ENCODE measurements at regions of chr4 and their contacts with region 1.

Region 1: GRCh38 chr4:88456757-88457306 is at the start of gene HERC5:
- DNase-seq: peak; percentile 87
- ATAC-seq: peak; percentile 91
- H3K4me3 ChIP-seq: peak within 1 kb of the TSS; percentile 78
- H3K27ac ChIP-seq: peak within 1 kb of the TSS; percentile 97
- H3K4me1 ChIP-seq: peaks cover 5% of the 10 kb centered on the region
- H3K27me3 ChIP-seq: no peaks in the 10 kb centered on the region
- CTCF ChIP-seq: peak in 2 of 3 experiments; percentile 33 to 63; a peak in 3 of 6 replicates
- EP300 ChIP-seq: no peak
- POLR2A ChIP-seq: peak; percentile 89
- RAD21 ChIP-seq: peak; percentile 34; the same call in 1 of the 2 replicates
- polyA plus RNA-seq, gene HERC5: 12.5 to 18.6 TPM

Region 2: DNA sequence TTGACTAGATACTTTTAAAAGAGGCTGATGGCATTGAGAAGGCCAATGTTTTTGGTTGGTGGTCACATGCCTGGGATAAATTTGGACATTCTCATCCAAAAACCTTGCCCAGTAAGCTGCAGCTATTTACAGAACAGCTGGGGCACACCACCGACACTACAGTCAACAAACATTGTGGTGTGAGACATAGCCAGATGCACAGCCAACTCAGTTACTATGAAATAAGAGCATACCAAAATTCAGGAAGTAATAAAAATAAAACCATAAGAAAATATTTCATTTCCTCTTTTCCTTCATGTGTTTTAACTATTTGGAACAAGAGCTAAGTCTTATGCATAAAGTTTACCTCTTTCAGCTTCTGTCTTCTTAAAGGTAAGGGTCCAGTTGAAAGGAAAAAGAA is 181.3 kb before region 1 on chr4:
- CTCF ChIA-PET with region 1: interaction called, 4 read pairs
- POLR2A ChIA-PET with region 1: interaction called, 27 read pairs
- RAD21 ChIA-PET with region 1: interaction called, 3 read pairs
- SMC1A ChIA-PET with region 1: interaction called, 19 read pairs
- in situ Hi-C with region 1: loop called (anchors 5 kb)
- intact Hi-C with region 1: no loop called
- DNase-seq: no peak
- ATAC-seq: peak; percentile 65
- H3K4me3 ChIP-seq: peak overlapping the region; percentile 53
- H3K27ac ChIP-seq: peak overlapping the region; percentile 1; the same call in 1 of the 2 replicates
- H3K4me1 ChIP-seq: peaks cover 39% of the 10 kb centered on the region
- H3K27me3 ChIP-seq: no peaks in the 10 kb centered on the region
- CTCF ChIP-seq: no peak
- EP300 ChIP-seq: no peak
- POLR2A ChIP-seq: no peak
- RAD21 ChIP-seq: no peak

Region 3: DNA sequence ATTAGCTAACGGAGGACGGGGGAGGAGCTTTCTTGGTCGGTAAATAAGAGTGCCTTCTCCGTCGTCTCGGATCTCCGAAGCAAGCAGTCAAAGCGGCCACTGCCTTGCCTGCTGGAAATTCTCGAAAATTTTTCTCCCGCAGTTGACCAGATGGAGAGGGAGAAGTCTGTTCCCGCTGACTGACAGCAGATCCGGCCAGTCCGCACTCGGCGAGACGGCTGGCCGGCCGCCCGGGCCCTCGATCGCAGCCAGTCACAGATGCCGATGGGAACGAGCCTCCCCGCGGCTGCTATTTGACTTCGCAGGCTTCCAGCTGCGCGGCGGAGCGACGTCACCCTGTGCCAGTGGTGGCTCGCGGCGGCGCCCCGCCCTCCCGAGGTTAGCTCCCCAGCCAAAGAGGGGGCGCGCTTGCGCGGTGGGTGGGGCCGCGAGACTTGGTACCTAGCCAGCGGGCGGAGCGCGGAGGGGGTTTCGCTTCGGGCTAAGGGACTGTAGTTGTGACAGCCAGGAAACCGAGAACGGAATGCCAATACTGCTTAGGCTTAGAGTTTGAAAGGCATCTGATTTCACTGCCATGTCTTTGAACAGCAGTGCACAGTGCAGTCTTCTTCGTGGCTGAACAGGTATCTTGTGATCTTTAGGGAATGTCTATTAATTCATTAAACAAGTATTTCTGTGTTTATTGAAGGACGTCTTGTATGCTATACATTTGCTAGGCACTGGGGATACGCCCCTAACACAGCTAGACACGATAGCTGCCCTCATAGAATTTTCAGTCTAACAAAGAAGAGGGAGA is 172.2 kb before region 1 on chr4 and contains the start of gene PPM1K:
- CTCF ChIA-PET with region 1: interaction called, 4 read pairs
- POLR2A ChIA-PET with region 1: interaction called, 27 read pairs
- RAD21 ChIA-PET with region 1: interaction called, 25 read pairs
- SMC1A ChIA-PET with region 1: interaction called, 19 read pairs
- in situ Hi-C with region 1: loop called (anchors 5 kb)
- intact Hi-C with region 1: loop called (anchors 2 kb)
- DNase-seq: peak; percentile 93
- ATAC-seq: peak; percentile 88
- H3K4me3 ChIP-seq: peak within 1 kb of the TSS; percentile 73
- H3K27ac ChIP-seq: peak within 1 kb of the TSS; percentile 98
- H3K4me1 ChIP-seq: 0 out of 2 replicates have a peak, but pooled peaks cover 5% of the 10 kb centered on the region
- H3K27me3 ChIP-seq: no peaks in the 10 kb centered on the region
- CTCF ChIP-seq: no peak
- EP300 ChIP-seq: 0 out of 4 replicates have a peak, but pooled peaks of 1 of the 2 experiments have one; percentile 4
- POLR2A ChIP-seq: no peak; the same call in none of the 2 replicates
- RAD21 ChIP-seq: no peak
- polyA plus RNA-seq, gene PPM1K: 25.3 to 25.4 TPM

Region 4: DNA sequence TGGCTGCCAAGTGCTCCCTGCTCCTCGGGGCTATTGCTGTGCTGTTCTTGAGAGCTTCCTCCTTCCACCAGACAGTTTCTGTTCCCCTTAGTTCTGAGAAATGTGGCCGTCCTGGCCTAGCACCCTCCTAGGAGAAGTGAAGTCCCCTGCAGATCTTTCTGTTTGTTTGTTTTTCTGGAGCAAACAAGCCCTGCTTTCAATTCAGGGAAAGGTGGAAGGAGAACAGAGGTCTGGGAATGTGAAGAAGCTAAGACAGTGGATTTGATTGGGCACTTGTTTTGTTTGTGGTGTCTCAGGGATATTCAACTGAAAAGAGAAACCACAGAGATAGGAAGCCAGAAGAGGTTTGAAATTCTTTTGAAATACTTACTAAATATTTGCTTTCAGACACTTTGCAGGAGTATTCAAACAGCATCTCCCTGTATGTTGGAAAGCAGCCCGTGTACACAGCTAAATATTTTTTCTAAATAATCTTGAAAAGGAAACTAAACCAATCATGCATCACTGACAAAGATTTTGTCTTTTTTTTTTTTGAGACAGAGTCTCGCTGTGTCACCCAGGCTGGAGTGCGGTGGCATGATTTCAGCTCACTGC is 136.0 kb before region 1 on chr4:
- CTCF ChIA-PET with region 1: interaction called, 7 read pairs
- POLR2A ChIA-PET with region 1: interaction called, 4 read pairs
- RAD21 ChIA-PET with region 1: interaction called, 11 read pairs
- SMC1A ChIA-PET with region 1: interaction called, 3 read pairs
- in situ Hi-C with region 1: no loop called
- intact Hi-C with region 1: no loop called
- DNase-seq: peak; percentile 83
- ATAC-seq: peak; percentile 100
- H3K4me3 ChIP-seq: peak overlapping the region; percentile 53
- H3K27ac ChIP-seq: peak overlapping the region; percentile 93
- H3K4me1 ChIP-seq: peaks cover 17% of the 10 kb centered on the region
- H3K27me3 ChIP-seq: no peaks in the 10 kb centered on the region
- CTCF ChIP-seq: no peak
- EP300 ChIP-seq: peak in 1 of 2 experiments; percentile 80; a peak in 2 of 4 replicates
- POLR2A ChIP-seq: peak; percentile 49
- RAD21 ChIP-seq: no peak

Region 5: GRCh38 chr4:88366460-88366859 is 90.4 kb before region 1 on chr4:
- CTCF ChIA-PET with region 1: interaction called, 41 read pairs
- POLR2A ChIA-PET with region 1: interaction called, 5 read pairs
- RAD21 ChIA-PET with region 1: interaction called, 11 read pairs
- SMC1A ChIA-PET with region 1: interaction called, 7 read pairs
- in situ Hi-C with region 1: no loop called
- intact Hi-C with region 1: no loop called
- DNase-seq: no peak
- ATAC-seq: peak; percentile 36
- H3K4me3 ChIP-seq: no peak overlapping the region
- H3K27ac ChIP-seq: no peak overlapping the region
- H3K4me1 ChIP-seq: no peaks in the 10 kb centered on the region
- H3K27me3 ChIP-seq: no peaks in the 10 kb centered on the region
- CTCF ChIP-seq: no peak
- EP300 ChIP-seq: no peak
- POLR2A ChIP-seq: no peak
- RAD21 ChIP-seq: no peak

Region 6: DNA sequence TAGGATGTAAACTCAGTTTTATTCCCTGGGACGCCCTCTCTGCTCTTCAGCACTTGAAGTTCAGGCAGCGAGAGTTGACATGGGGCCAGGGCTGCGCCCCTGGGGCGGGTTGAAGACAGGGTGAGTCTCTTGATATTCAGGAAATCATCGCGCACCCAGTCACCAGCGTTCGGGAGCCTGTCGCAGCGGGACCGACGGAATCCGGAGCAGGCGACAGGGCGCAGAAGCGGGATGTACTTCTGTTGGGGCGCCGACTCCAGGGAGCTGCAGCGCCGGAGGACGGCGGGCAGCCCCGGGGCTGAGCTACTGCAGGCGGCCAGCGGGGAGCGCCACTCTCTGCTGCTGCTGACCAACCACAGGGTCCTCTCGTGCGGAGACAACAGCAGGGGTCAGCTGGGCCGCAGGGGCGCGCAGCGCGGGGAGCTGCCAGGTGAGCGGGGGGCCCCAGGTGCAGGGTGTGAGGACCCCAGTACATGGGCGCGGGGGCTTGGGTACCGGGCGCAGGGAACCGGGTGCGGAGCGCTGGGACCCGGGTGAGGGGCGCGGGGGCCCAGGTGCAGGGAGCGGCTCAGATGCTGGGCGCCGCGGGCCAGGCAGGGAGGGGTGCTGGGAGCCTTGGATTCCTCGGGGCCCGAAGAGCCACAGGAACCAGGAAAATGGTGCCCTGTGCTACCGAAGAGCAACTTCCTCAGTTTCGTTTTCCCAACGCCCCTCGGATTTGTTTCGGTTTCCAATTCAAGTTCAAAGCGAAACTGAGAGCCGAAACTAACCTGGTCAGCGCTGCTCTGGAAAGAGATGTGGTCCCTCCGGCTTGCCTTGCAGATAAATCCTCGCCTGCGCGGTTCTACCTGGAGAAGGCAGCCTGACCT is 77.9 kb before region 1 on chr4 and contains the start of gene HERC6:
- CTCF ChIA-PET with region 1: interaction called, 32 read pairs
- POLR2A ChIA-PET with region 1: interaction called, 39 read pairs
- RAD21 ChIA-PET with region 1: interaction called, 32 read pairs
- SMC1A ChIA-PET with region 1: interaction called, 18 read pairs
- in situ Hi-C with region 1: no loop called
- intact Hi-C with region 1: loop called (anchors 1 kb)
- DNase-seq: peak; percentile 84
- ATAC-seq: peak; percentile 85
- H3K4me3 ChIP-seq: peak within 1 kb of the TSS; percentile 75
- H3K27ac ChIP-seq: peak within 1 kb of the TSS; percentile 82
- H3K4me1 ChIP-seq: peaks cover 24% of the 10 kb centered on the region
- H3K27me3 ChIP-seq: no peaks in the 10 kb centered on the region
- CTCF ChIP-seq: peak; percentile 69 to 83 (median 70)
- EP300 ChIP-seq: 0 out of 4 replicates have a peak, but pooled peaks of 1 of the 2 experiments have one; percentile 56
- POLR2A ChIP-seq: peak; percentile 78
- RAD21 ChIP-seq: peak; percentile 57
- polyA plus RNA-seq, gene HERC6: 1.7 to 2.2 TPM

Region 7: GRCh38 chr4:88442703-88443191 is 14.1 kb before region 1 on chr4:
- CTCF ChIA-PET with region 1: interaction called, 8 read pairs
- POLR2A ChIA-PET with region 1: interaction called, 7 read pairs
- RAD21 ChIA-PET with region 1: interaction called, 4 read pairs
- SMC1A ChIA-PET with region 1: interaction called, 15 read pairs
- in situ Hi-C with region 1: no loop called
- intact Hi-C with region 1: no loop called
- DNase-seq: no peak
- ATAC-seq: no peak
- H3K4me3 ChIP-seq: no peak overlapping the region
- H3K27ac ChIP-seq: no peak overlapping the region
- H3K4me1 ChIP-seq: no peaks in the 10 kb centered on the region
- H3K27me3 ChIP-seq: no peaks in the 10 kb centered on the region
- CTCF ChIP-seq: no peak
- EP300 ChIP-seq: no peak
- POLR2A ChIP-seq: no peak
- RAD21 ChIP-seq: no peak

Measured in GM12878 (cell line).